ENCODE measurements at regions of chr11 and their contacts with region 1.

Region 1: DNA sequence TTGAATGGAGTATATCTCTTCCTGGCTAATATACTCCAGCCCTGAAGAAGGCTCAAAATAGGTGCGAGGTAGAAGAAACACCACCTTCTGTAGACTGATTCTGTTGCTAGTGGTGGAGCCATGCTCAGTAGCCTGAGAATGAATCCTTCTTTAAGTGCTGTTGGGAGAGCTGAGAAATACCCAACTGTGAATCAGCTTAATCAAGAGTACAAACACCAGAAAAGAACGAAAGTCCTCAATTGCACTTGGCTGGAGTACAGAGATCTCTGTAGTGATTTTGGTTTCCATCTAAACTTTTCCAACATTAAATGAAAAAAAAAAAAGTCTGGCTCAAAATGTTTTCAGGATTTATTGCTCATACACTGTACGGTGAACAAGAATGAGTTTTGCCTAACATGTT is 619.1 kb downstream of the METTL15 start:
- DNase-seq: peak; percentile 63
- H3K4me3 ChIP-seq: no peak overlapping the region
- H3K27ac ChIP-seq: no peak overlapping the region
- H3K4me1 ChIP-seq: no peaks in the 10 kb centered on the region
- H3K27me3 ChIP-seq: no peaks in the 10 kb centered on the region
- CTCF ChIP-seq: no peak
- POLR2A ChIP-seq: no peak

Region 2: DNA sequence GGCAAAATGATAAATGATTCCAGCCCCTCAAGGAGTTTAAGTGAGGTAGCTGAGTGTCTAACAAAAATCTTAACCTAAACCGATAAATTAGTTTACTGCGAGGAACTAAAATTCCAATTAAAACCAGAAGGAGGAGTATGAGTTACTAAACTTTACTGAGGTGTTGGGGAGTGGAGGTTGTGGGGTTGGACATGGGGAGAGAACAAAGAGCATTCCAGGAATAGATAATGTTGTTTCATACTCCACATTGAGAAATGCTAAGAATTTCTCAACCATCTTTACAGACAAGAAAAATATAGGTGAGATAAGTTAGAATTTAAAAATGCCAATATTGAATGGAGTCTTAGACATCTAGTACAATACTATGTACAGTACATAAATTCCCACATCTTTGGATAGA is 130.4 kb before region 1 on chr11:
- CTCF ChIA-PET with region 1: no interaction called
- POLR2A ChIA-PET with region 1: no interaction called
- dilution Hi-C with region 1: no loop called
- intact Hi-C with region 1: no loop called
- DNase-seq: no peak
- H3K4me3 ChIP-seq: no peak overlapping the region
- H3K27ac ChIP-seq: no peak overlapping the region
- H3K4me1 ChIP-seq: no peaks in the 10 kb centered on the region
- H3K27me3 ChIP-seq: no peaks in the 10 kb centered on the region
- CTCF ChIP-seq: no peak
- POLR2A ChIP-seq: no peak

Region 3: GRCh38 chr11:28713850-28714249 is 13.4 kb before region 1 on chr11:
- CTCF ChIA-PET with region 1: interaction called, 10 read pairs
- POLR2A ChIA-PET with region 1: no interaction called
- dilution Hi-C with region 1: no loop called
- intact Hi-C with region 1: no loop called
- DNase-seq: no peak
- H3K4me3 ChIP-seq: no peak overlapping the region
- H3K27ac ChIP-seq: no peak overlapping the region
- H3K4me1 ChIP-seq: peaks cover 2% of the 10 kb centered on the region
- H3K27me3 ChIP-seq: no peaks in the 10 kb centered on the region
- CTCF ChIP-seq: no peak
- POLR2A ChIP-seq: no peak

Region 4: DNA sequence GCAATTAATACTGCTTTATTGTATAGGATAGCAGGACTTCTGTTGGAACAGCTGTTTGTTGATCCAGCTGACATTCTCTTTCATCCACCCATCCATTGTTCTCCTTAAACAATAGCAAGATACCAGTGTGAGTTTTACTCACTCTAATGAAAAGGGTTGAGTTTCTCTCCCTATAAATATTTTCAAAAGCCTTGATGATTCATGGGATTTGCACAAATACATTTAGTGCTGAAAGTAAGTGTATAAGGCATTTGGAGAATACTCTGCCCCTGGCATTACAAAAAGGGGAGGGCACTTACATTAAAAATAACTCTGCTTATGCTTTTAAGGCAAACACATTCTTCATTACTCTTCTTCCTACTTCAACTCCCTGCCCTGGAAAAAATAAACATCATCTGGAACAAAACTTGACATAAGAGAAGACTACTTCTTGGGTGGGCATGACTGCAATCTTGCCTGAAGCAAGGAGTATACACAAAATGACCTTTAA is 15.9 kb after region 1 on chr11:
- CTCF ChIA-PET with region 1: interaction called, 42 read pairs
- POLR2A ChIA-PET with region 1: no interaction called
- dilution Hi-C with region 1: no loop called
- intact Hi-C with region 1: no loop called
- DNase-seq: peak; percentile 91
- H3K4me3 ChIP-seq: no peak overlapping the region
- H3K27ac ChIP-seq: peak overlapping the region; percentile 70
- H3K4me1 ChIP-seq: peaks cover 45% of the 10 kb centered on the region
- H3K27me3 ChIP-seq: no peaks in the 10 kb centered on the region
- CTCF ChIP-seq: no peak
- POLR2A ChIP-seq: no peak

Measured in endothelial cell of umbilical vein (primary cell).